ENCODE measurements at regions of chr9 and their contacts with region 1.

Region 1: GRCh38 chr9:127785023-127785932 is 556 bp upstream of the CDK9 start:
- DNase-seq: peak; percentile 86 to 93 (median 92)
- H3K4me3 ChIP-seq: peak overlapping the region; percentile 100
- H3K27ac ChIP-seq: peak overlapping the region; percentile 95 to 96
- H3K4me1 ChIP-seq: peaks cover 11% of the 10 kb centered on the region
- H3K27me3 ChIP-seq: no peaks in the 10 kb centered on the region
- CTCF ChIP-seq: peak; percentile 92 to 96 (median 95)
- EP300 ChIP-seq: no peak
- POLR2A ChIP-seq: peak; percentile 11

Region 2: GRCh38 chr9:127734747-127735529 is 50.3 kb before region 1 on chr9 and contains the start of gene TOR2A:
- intact Hi-C with region 1: loop called (anchors 1 to 5 kb)
- DNase-seq: peak; percentile 95 to 98 (median 98)
- H3K4me3 ChIP-seq: peak within 1 kb of the TSS; percentile 88
- H3K27ac ChIP-seq: peak within 1 kb of the TSS; percentile 80 to 88
- H3K4me1 ChIP-seq: peaks cover 6% of the 10 kb centered on the region
- H3K27me3 ChIP-seq: no peaks in the 10 kb centered on the region
- CTCF ChIP-seq: peak; percentile 92 to 100 (median 100)
- EP300 ChIP-seq: no peak
- POLR2A ChIP-seq: peak; percentile 93
- total RNA-seq, gene TOR2A: 8.8 to 12.2 (median 9.9) TPM

Region 3: GRCh38 chr9:127742435-127743088 is 42.7 kb before region 1 on chr9:
- intact Hi-C with region 1: loop called in 2 of 4 experiments (anchors 5 kb)
- DNase-seq: peak; percentile 66 to 82 (median 77)
- H3K4me3 ChIP-seq: peak overlapping the region; percentile 4
- H3K27ac ChIP-seq: no peak overlapping the region
- H3K4me1 ChIP-seq: peaks cover 2% of the 10 kb centered on the region
- H3K27me3 ChIP-seq: no peaks in the 10 kb centered on the region
- CTCF ChIP-seq: no peak
- EP300 ChIP-seq: no peak
- POLR2A ChIP-seq: no peak

Measured in ovary (tissue), 10 donors.